ENCODE measurements at regions of chr17 and their contacts with region 1.

Region 1: GRCh38 chr17:50478391-50479381 is at the start of gene RSAD1:
- DNase-seq: peak; percentile 93
- ATAC-seq: peak; percentile 94
- H3K4me3 Mint-ChIP-seq: peak within 1 kb of the TSS; percentile 85
- H3K27ac Mint-ChIP-seq: peak within 1 kb of the TSS; percentile 93
- H3K4me1 Mint-ChIP-seq: peaks cover 25% of the 10 kb centered on the region
- H3K27me3 Mint-ChIP-seq: no peaks in the 10 kb centered on the region
- total RNA-seq, gene RSAD1: 21.5 to 29.0 TPM

Region 2: DNA sequence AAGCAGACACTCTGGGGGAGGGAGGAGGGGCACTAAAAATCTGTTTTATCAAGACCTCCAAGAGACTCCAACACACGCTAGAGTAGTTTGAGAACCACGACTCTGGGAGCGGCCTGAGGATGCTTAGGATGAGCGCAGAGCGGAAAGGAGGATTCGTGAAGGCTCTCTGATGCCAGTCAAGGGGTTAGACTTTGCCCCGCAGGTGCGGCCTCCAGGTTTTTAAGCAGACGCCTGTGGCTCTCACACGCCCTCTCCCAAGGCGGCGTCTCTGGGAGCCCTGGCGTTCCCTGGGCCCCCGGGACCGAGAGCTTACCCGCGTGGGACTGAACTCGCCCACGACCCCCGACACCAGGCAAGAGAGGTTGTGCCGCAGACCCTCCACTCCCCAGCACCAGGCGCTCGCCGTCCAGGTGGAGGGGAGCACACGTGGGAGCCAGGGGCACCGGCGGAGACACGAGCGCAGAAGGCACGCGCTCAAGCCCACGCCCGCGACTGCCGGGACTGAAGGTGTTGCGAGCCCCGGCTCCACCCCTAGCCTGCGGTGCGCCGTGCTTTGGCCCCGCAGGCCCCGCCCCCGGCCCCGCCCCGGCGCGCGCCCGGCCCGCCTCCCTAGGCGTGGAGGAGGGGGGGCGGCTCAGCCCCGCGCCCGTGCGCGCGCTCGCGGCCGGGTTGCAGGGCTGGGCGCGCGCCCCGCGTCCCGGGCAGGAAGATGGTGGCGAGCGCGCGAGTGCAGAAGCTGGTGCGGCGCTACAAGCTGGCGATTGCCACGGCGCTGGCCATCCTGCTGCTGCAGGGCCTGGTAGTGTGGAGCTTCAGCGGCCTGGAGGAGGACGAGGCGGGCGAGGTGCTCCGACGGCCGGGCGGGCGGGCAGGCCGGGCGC is 133.0 kb before region 1 on chr17 and contains the start of gene XYLT2:
- CTCF ChIA-PET with region 1: no interaction called
- POLR2A ChIA-PET with region 1: no interaction called
- intact Hi-C with region 1: loop called in 1 of 2 experiments (anchors 1 kb)
- DNase-seq: peak; percentile 95
- ATAC-seq: peak; percentile 91
- H3K4me3 Mint-ChIP-seq: peak within 1 kb of the TSS; percentile 90
- H3K27ac Mint-ChIP-seq: peak within 1 kb of the TSS; percentile 94
- H3K4me1 Mint-ChIP-seq: peaks cover 32% of the 10 kb centered on the region
- H3K27me3 Mint-ChIP-seq: no peaks in the 10 kb centered on the region
- total RNA-seq, gene XYLT2: 29.8 to 30.4 TPM

Region 3: GRCh38 chr17:50397111-50397918 is 81.4 kb before region 1 on chr17 and contains the start of gene LRRC59:
- CTCF ChIA-PET with region 1: interaction called, 15 read pairs
- POLR2A ChIA-PET with region 1: interaction called, 4 read pairs
- intact Hi-C with region 1: loop called in 1 of 2 experiments (anchors 1 kb)
- DNase-seq: peak; percentile 95
- ATAC-seq: peak; percentile 95
- H3K4me3 Mint-ChIP-seq: peak within 1 kb of the TSS; percentile 93
- H3K27ac Mint-ChIP-seq: peak within 1 kb of the TSS; percentile 88
- H3K4me1 Mint-ChIP-seq: peaks cover 33% of the 10 kb centered on the region
- H3K27me3 Mint-ChIP-seq: no peaks in the 10 kb centered on the region
- total RNA-seq, gene LRRC59: 74.4 to 82.7 TPM

Region 4: GRCh38 chr17:50507871-50508572 is 29.3 kb after region 1 on chr17 and contains the start of gene MYCBPAP:
- CTCF ChIA-PET with region 1: interaction called, 8 read pairs
- POLR2A ChIA-PET with region 1: no interaction called
- intact Hi-C with region 1: loop called (anchors 1 to 2 kb)
- DNase-seq: peak; percentile 85
- ATAC-seq: peak; percentile 38
- H3K4me3 Mint-ChIP-seq: peak within 1 kb of the TSS; percentile 72
- H3K27ac Mint-ChIP-seq: peak within 1 kb of the TSS; percentile 77
- H3K4me1 Mint-ChIP-seq: peaks cover 34% of the 10 kb centered on the region
- H3K27me3 Mint-ChIP-seq: peaks cover 4% of the 10 kb centered on the region
- total RNA-seq, gene MYCBPAP: 1.4 to 1.8 TPM

Region 5: DNA sequence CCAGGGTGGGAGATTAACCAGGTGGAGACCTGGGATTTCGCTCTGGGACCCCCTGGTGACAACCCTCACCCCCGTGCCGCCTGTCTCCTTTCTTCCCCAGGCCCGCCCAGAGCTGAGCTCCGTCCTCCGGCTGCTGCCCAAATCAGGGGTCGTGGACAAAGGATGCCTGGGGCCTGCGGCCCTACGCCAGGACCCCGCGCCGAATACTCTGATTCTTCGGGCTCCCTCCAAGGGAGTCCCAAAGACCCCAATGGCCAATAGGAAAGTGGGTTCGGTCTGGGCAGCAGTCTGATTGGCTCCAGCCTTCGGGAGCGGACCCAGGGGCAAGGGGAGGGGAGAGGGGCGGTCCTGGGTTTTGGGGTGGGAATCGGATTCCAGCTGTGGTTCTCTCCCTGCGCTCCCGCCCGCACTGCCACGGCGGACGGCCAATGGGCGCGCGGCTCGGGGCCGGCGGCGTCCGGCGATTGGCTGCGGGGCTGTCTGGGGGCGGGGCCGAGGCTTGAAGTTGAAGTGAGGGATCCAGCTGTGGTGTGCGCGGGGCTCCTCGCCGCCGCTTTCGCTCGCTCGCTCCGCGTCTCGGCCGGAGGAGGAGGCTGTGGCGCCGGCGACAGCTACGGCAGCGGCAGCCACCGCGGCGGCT is 81.6 kb after region 1 on chr17 and contains the start of gene CACNA1G:
- CTCF ChIA-PET with region 1: interaction called, 3 read pairs
- POLR2A ChIA-PET with region 1: no interaction called
- intact Hi-C with region 1: loop called in 1 of 2 experiments (anchors 1 kb)
- DNase-seq: peak; percentile 93
- ATAC-seq: peak; percentile 94
- H3K4me3 Mint-ChIP-seq: peak within 1 kb of the TSS; percentile 55
- H3K27ac Mint-ChIP-seq: no peak within 1 kb of the TSS
- H3K4me1 Mint-ChIP-seq: peaks cover 21% of the 10 kb centered on the region
- H3K27me3 Mint-ChIP-seq: peaks cover 51% of the 10 kb centered on the region
- total RNA-seq, gene CACNA1G: not detected

Region 6: GRCh38 chr17:50707289-50708049 is 228.8 kb after region 1 on chr17 and contains the start of gene ANKRD40:
- CTCF ChIA-PET with region 1: no interaction called
- POLR2A ChIA-PET with region 1: no interaction called
- intact Hi-C with region 1: loop called (anchors 2 to 10 kb)
- DNase-seq: peak; percentile 94
- ATAC-seq: peak; percentile 76
- H3K4me3 Mint-ChIP-seq: peak within 1 kb of the TSS; percentile 91
- H3K27ac Mint-ChIP-seq: peak within 1 kb of the TSS; percentile 99
- H3K4me1 Mint-ChIP-seq: peaks cover 46% of the 10 kb centered on the region
- H3K27me3 Mint-ChIP-seq: no peaks in the 10 kb centered on the region
- total RNA-seq, gene ANKRD40: 28.0 to 29.8 TPM